Activated T-helper 2 cell treated with anti-CD3 and anti-CD28 coated beads, Interferon-gamma antibody, Interleukin-2, Interleukin-4, amounts not matched to agents 10 μg/mL and 5 μg/mL and 100 μg/mL, durations not matched to agents 14 hours and 24 hours and 36 hours (primary cell): ENCODE measurements at regions of chr1 and their contacts with region 1.

Region 1: DNA sequence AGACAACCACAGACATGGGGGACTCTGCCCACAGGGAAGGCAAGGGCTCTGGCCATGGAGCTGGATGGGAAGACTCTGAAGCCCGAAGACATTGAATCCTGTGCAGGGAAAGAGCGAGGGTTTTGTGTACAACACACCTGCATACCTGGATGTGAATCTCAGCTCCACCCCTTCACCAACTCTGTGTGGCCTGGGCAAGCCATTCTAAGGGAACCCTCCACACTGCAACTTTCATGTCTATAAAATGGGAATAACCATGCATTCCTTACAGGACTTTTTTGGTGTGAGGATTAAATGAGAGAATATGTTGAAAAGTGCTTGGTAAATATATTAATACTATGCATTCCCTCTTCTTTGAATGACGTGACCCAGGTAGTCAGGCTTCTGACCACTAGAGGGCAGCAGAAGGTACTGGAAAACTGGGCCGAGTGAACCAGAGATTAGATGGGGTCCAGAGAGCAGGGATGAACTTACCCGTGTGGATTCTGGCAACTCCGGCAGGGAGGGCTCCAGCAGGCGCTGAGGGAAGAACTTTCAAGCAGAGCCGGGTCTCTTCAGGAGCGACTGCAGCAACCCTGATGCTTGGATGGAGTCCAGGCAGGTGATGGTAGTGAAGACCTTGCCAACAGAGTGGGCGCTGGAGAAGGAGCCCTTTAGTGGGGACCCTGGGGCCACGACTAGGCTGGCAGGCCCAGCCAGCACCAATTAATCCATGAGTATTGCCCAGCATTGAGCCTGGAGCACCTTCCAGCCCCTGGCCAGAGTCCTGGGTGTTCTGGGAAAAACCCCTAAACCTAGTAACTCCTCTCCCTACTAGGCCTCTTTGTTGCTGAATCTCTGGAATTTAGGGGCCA is 834 bp upstream of the ELF3 start:
- DNase-seq: peak; percentile 32
- H3K4me3 Mint-ChIP-seq: no peak overlapping the region
- H3K27ac Mint-ChIP-seq: no peak overlapping the region
- H3K4me1 Mint-ChIP-seq: no peaks in the 10 kb centered on the region
- H3K27me3 Mint-ChIP-seq: no peaks in the 10 kb centered on the region

Region 2: GRCh38 chr1:201850053-201850397 is 159.5 kb before region 1 on chr1:
- intact Hi-C with region 1: no loop called
- DNase-seq: no peak
- H3K4me3 Mint-ChIP-seq: no peak overlapping the region
- H3K27ac Mint-ChIP-seq: no peak overlapping the region
- H3K4me1 Mint-ChIP-seq: peaks cover 2% of the 10 kb centered on the region
- H3K27me3 Mint-ChIP-seq: no peaks in the 10 kb centered on the region

Region 3: GRCh38 chr1:201877877-201878401 is 131.6 kb before region 1 on chr1:
- intact Hi-C with region 1: no loop called
- DNase-seq: no peak
- H3K4me3 Mint-ChIP-seq: no peak overlapping the region
- H3K27ac Mint-ChIP-seq: no peak overlapping the region
- H3K4me1 Mint-ChIP-seq: no peaks in the 10 kb centered on the region
- H3K27me3 Mint-ChIP-seq: no peaks in the 10 kb centered on the region

Region 4: GRCh38 chr1:202056644-202057461 is 47.3 kb after region 1 on chr1:
- intact Hi-C with region 1: no loop called
- DNase-seq: no peak
- H3K4me3 Mint-ChIP-seq: no peak overlapping the region
- H3K27ac Mint-ChIP-seq: no peak overlapping the region
- H3K4me1 Mint-ChIP-seq: no peaks in the 10 kb centered on the region
- H3K27me3 Mint-ChIP-seq: peaks cover 3% of the 10 kb centered on the region

Region 5: DNA sequence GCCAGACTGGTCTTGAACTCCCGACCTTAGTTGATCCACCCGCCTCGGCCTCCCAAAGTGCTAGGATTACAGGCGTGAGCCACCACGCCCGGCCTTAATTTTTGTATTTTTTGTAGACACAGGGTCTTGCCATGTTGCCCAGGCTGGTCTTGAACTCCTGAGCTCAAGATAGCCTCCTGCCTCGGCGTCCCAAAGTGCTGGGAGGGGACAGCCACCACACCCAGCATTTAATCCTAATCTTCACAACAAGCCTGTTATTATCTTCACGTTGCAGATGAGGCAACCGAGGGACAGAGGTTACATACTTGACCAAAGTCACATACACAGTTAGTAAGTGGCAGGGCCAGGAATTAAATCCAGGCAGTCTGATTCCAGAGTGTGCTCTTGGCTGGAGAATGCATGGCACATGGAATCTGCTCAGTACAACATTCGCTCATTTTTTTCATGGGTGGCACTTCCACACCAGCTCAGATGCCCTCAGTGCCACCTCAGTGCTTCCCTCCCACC is 108.4 kb after region 1 on chr1:
- intact Hi-C with region 1: loop called (anchors 5 kb)
- DNase-seq: no peak
- H3K4me3 Mint-ChIP-seq: no peak overlapping the region
- H3K27ac Mint-ChIP-seq: no peak overlapping the region
- H3K4me1 Mint-ChIP-seq: no peaks in the 10 kb centered on the region
- H3K27me3 Mint-ChIP-seq: no peaks in the 10 kb centered on the region

Region 6: DNA sequence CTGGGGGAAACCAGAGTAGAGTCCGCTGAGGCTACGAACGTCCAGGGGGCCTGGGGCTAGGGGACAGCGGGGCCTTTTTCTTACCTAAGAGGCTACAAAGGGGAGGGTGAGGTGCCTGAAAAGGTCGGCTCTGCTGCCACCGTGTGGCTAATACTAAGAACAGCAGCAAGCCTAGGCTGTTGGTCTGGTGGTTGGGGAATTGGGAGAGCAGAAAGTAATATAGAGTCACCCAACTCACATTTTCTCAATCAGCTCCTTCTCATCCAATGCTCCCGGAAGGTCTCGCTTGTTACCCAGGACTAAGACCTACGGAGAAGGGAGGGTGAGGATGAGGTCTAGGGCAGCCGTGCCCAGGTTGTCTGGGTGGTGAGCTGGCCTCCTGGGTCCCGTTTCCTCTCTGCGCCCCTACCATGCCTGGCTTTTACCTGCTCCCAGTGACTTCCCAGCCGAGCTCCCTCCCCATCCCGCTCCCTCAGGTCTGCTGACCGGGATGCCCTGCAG is 125.7 kb after region 1 on chr1:
- intact Hi-C with region 1: loop called (anchors 1 kb)
- DNase-seq: peak; percentile 38
- H3K4me3 Mint-ChIP-seq: no peak overlapping the region
- H3K27ac Mint-ChIP-seq: no peak overlapping the region
- H3K4me1 Mint-ChIP-seq: no peaks in the 10 kb centered on the region
- H3K27me3 Mint-ChIP-seq: no peaks in the 10 kb centered on the region